Prostate gland (tissue), 2 donors: ENCODE measurements at regions of chr13 and their contacts with region 1.

Region 1: DNA sequence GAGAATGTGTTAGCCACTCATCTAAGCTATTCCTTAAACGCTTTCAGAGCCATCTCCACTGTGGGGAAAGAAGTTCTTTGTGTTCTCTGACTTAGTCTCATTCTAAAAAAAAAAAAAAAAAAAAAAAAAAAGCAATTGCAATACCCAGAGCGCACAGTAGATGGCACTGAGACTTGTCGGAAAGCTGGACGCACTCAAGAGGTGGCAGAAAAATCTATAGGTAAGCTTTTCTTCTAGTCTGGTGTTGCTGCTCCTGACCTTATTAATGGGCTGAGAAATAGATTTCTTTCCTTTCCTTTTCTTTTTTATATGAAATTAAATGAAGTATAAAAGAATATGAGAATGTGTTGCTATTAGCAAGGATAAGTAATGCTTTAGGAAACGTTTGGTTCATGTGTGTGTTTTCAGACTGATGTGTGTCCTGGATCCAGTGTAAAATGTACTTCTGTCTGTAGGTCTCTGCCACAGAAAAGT is 4.7 kb upstream of the GJB2 start:
- DNase-seq: no peak
- H3K4me3 ChIP-seq: no peak overlapping the region
- H3K27ac ChIP-seq: no peak overlapping the region
- H3K4me1 ChIP-seq: peaks cover 4% of the 10 kb centered on the region
- H3K27me3 ChIP-seq: no peaks in the 10 kb centered on the region
- CTCF ChIP-seq: peak; percentile 19 to 53 (median 40)
- POLR2A ChIP-seq: no peak

Region 2: GRCh38 chr13:20489185-20489820 is 291.9 kb after region 1 on chr13:
- intact Hi-C with region 1: loop called (anchors 10 kb)
- DNase-seq: peak; percentile 23
- H3K4me3 ChIP-seq: no peak overlapping the region
- H3K27ac ChIP-seq: no peak overlapping the region
- H3K4me1 ChIP-seq: no peaks in the 10 kb centered on the region
- H3K27me3 ChIP-seq: no peaks in the 10 kb centered on the region
- CTCF ChIP-seq: peak in 3 of 4 experiments; percentile 24 to 51 (median 32)
- POLR2A ChIP-seq: no peak